ENCODE measurements at regions of chr19 and their contacts with region 1.

Region 1: GRCh38 chr19:43446746-43447489 is 18.5 kb downstream of the LYPD3 start:
- DNase-seq: peak; percentile 65 to 98 (median 84)

Region 2: GRCh38 chr19:43503501-43504425 is 56.8 kb after region 1 on chr19:
- intact Hi-C with region 1: loop called (anchors 5 kb)
- DNase-seq: peak; percentile 83 to 99 (median 94)

Region 3: DNA sequence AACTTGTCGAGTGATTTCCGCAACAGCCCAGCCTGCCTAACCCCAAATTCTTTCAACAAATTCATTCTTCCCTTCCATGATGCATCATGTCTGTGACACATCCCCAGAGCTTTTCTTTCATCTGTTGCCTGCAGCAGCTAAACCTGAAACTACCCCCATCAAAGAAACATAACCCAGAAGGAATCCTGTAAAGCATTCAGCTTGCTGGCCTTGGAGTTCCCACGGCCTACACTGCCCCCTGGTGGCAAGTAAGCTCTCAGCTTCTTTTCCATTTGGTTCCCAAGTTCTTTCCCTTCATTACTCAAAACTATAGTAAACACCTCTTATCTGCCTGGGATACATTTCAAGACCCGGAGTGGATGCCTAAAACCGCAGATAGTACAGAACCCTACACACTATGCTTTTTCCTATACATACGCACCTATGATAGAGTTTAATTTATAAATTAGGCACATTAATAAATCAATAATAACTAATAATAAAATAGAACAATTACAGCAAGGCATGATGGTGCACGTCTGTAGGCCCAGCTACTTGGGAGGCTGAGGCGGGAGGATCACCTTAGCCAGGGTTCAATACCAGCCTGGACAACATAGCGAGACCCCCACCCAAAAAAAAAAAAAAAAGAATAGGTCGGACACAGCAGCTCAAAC is 72.6 kb after region 1 on chr19:
- intact Hi-C with region 1: loop called (anchors 1 kb)
- DNase-seq: peak in 9 of 10 donors; percentile 64 to 97 (median 87)

Measured in posterior cingulate gyrus (tissue), 11 donors.